Mucosa of descending colon (tissue), 3 donors: ENCODE measurements at regions of chr12 and their contacts with region 1.

Region 1: DNA sequence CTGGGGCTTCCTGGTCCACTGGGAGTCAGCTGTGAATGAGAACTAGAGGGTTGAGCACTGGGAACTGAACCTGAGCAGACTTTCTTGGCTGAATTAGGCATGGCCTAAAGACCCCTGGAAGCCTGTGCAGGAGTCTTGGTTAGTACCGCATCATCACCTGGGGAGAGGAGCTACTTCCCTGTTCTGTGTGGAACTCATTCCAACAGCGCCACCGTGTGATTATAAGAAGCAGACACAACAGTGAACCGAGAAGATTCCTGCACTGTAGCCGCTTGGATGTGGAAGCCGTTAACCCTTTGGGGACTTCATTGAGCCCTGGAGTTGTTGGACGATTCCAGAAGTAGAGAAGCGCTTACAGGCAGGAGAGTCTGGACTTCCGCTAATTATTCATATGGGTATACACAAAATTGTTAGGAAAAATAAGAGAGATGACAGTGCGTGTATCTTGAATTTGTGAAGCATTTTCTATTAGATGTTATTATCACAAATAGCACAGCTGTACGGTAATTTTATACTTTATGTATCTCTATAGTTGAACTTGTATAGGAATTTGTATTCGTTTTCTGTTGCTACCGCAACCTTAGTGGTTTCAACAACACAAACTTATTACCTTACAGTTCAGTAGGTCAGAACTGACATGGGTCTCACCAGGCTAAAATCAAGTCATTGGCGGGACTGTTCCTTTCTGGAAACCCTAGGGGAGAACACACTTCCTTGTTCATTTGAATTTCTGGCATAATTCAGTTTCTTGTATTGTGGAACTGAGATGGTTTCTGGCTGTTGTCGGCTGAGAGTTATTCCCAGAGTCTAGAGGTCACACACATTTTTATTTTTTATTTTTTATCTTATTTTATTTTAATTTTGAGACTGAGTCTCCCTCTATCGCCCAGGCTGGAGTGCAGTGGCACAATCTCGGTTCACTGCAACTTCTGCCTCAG is 100.7 kb downstream of the C2CD5 start:
- DNase-seq: peak in 2 of 3 donors; percentile 27 to 81
- ATAC-seq: peak; percentile 99
- H3K4me3 ChIP-seq: no peak overlapping the region
- H3K4me1 ChIP-seq: no peaks in the 10 kb centered on the region
- CTCF ChIP-seq: peak; percentile 48

Region 2: GRCh38 chr12:21697904-21698630 is 745.6 kb before region 1 on chr12:
- intact Hi-C with region 1: loop called in 1 of 2 experiments (anchors 10 kb)
- DNase-seq: peak in 1 of 3 donors; percentile 41
- ATAC-seq: no peak
- H3K4me3 ChIP-seq: no peak overlapping the region
- H3K4me1 ChIP-seq: no peaks in the 10 kb centered on the region
- CTCF ChIP-seq: no peak

Region 3: GRCh38 chr12:22083167-22083566 is 360.5 kb before region 1 on chr12:
- intact Hi-C with region 1: loop called (anchors 10 kb)
- DNase-seq: peak in 1 of 3 donors; percentile 41
- ATAC-seq: no peak
- H3K4me3 ChIP-seq: no peak overlapping the region
- H3K4me1 ChIP-seq: no peaks in the 10 kb centered on the region
- CTCF ChIP-seq: no peak

Region 4: GRCh38 chr12:22321638-22322037 is 122.0 kb before region 1 on chr12:
- intact Hi-C with region 1: no loop called
- DNase-seq: no peak
- ATAC-seq: peak; percentile 38
- H3K4me3 ChIP-seq: no peak overlapping the region
- H3K4me1 ChIP-seq: no peaks in the 10 kb centered on the region
- CTCF ChIP-seq: no peak

Region 5: DNA sequence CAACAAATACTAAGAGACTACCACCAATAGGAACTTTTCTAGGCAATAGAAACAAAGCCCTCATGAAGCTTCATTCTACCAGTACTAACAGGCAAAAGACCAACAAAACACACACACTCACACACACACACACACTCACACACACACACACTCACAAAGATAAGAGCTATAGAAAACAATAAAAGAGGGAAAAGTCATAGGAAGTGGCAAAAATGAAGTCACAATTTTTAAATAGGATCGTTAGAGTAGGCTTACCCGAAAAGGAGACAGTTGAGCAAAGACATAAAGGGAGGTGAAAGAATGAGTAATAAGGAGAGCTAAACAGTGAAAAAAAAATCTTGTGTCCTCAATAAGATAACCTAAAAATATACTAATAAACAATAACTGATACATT is 34.2 kb after region 1 on chr12:
- intact Hi-C with region 1: no loop called
- DNase-seq: no peak
- ATAC-seq: no peak
- H3K4me3 ChIP-seq: no peak overlapping the region
- H3K4me1 ChIP-seq: no peaks in the 10 kb centered on the region
- CTCF ChIP-seq: no peak

Region 6: GRCh38 chr12:22738945-22739344 is 295.3 kb after region 1 on chr12:
- intact Hi-C with region 1: no loop called
- DNase-seq: no peak
- ATAC-seq: no peak
- H3K4me3 ChIP-seq: no peak overlapping the region
- H3K4me1 ChIP-seq: no peaks in the 10 kb centered on the region
- CTCF ChIP-seq: no peak